Endothelial cell of umbilical vein (primary cell): ENCODE measurements at regions of chr15 and their contacts with region 1.

Region 1: GRCh38 chr15:72365844-72366243 is 10.0 kb downstream of the HEXA start:
- DNase-seq: no peak
- H3K4me3 ChIP-seq: no peak overlapping the region
- H3K27ac ChIP-seq: no peak overlapping the region
- H3K4me1 ChIP-seq: peaks cover 9% of the 10 kb centered on the region
- H3K27me3 ChIP-seq: no peaks in the 10 kb centered on the region
- CTCF ChIP-seq: no peak
- POLR2A ChIP-seq: no peak

Region 2: GRCh38 chr15:72353265-72353664 is 12.6 kb before region 1 on chr15:
- CTCF ChIA-PET with region 1: interaction called, 3 read pairs
- POLR2A ChIA-PET with region 1: interaction called, 10 read pairs
- dilution Hi-C with region 1: no loop called
- intact Hi-C with region 1: no loop called
- DNase-seq: no peak
- H3K4me3 ChIP-seq: no peak overlapping the region
- H3K27ac ChIP-seq: no peak overlapping the region
- H3K4me1 ChIP-seq: no peaks in the 10 kb centered on the region
- H3K27me3 ChIP-seq: no peaks in the 10 kb centered on the region
- CTCF ChIP-seq: no peak
- POLR2A ChIP-seq: no peak